ENCODE measurements at regions of chr11 and their contacts with region 1.

Region 1: DNA sequence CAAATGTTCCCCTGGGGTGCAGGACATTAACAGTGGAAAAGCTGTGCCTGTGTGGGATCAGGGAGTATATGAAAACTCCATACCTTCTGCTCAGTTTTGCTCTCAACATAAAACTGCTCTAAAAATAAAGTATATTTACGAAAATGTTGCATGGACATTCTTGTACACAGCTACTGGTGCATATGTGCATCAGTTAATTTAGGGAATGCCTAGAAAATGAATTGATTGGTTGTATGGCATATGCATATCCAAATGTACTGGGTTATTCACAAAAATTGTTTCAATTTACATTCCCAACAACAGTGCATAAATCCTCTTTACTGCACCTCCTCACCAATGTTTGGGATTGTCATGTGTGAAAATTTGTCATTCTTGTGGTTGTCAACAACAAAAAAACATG is 251.1 kb upstream of the MPPED2 start:
- DNase-seq: no peak
- H3K4me3 ChIP-seq: no peak overlapping the region
- H3K27ac ChIP-seq: no peak overlapping the region
- H3K4me1 ChIP-seq: no peaks in the 10 kb centered on the region
- H3K27me3 ChIP-seq: no peaks in the 10 kb centered on the region
- CTCF ChIP-seq: no peak

Region 2: GRCh38 chr11:30801357-30801756 is 35.9 kb before region 1 on chr11:
- CTCF ChIA-PET with region 1: no interaction called
- POLR2A ChIA-PET with region 1: no interaction called
- intact Hi-C with region 1: loop called (anchors 5 kb)
- DNase-seq: no peak
- H3K4me3 ChIP-seq: no peak overlapping the region
- H3K27ac ChIP-seq: no peak overlapping the region
- H3K4me1 ChIP-seq: no peaks in the 10 kb centered on the region
- H3K27me3 ChIP-seq: no peaks in the 10 kb centered on the region
- CTCF ChIP-seq: no peak

Measured in A673 (cell line).